Right ventricle myocardium superior (tissue), 1 donor: ENCODE measurements at regions of chr9 and their contacts with region 1.

Region 1: GRCh38 chr9:130770679-130771442 is 64.2 kb upstream of the ABL1 start:
- DNase-seq: no peak
- ATAC-seq: peak; percentile 71

Region 2: DNA sequence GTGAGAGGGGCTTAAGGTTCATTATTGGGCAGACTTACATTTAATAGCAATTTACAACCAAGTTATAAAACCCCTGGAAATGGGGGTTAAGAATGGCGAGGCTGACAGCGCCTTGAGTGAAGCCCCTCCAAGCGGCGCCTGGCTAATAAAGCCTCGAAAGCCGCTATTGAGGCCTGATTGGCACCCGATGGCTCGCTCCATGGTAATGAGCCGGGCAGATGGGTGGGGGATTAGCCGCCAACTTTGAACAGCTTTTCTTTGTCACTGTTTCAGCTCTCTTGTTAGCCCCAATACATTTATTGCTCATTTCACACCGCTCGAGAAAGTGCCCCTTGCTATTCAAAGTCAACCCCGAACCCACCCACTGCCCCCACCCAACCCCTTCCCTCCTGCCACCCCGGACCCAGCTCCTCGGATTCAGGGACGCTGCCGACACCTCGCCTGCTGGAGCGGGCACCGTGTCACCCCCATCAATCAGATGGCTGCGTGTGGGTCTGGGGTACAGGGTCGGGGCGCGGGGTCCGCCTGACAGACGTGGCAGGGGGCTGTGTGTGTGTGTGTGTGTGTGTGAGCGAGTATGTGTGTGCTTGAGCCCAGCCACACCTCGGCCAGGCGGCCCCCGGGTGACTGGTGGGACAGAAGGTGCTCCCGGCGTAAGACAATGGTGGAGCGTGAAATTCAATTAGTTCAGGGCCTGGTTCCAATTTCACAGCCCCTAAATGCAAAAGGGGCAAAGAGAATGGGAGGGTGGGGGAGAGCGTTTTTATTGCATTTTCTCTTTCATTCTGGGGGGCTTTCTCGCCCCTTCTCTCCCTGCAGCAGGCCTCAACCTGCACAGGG is 291.9 kb before region 1 on chr9:
- intact Hi-C with region 1: no loop called
- DNase-seq: no peak
- ATAC-seq: no peak

Region 3: GRCh38 chr9:130607640-130608420 is 163.0 kb before region 1 on chr9:
- intact Hi-C with region 1: no loop called
- DNase-seq: no peak
- ATAC-seq: peak; percentile 16

Region 4: GRCh38 chr9:130712564-130713285 is 58.1 kb before region 1 on chr9:
- intact Hi-C with region 1: loop called (anchors 5 kb)
- DNase-seq: peak; percentile 99
- ATAC-seq: peak; percentile 98

Region 5: GRCh38 chr9:130860458-130861316 is 89.8 kb after region 1 on chr9:
- intact Hi-C with region 1: loop called (anchors 2 kb)
- DNase-seq: peak; percentile 88
- ATAC-seq: peak; percentile 90